ENCODE measurements at regions of chr10 and their contacts with region 1.

Region 1: DNA sequence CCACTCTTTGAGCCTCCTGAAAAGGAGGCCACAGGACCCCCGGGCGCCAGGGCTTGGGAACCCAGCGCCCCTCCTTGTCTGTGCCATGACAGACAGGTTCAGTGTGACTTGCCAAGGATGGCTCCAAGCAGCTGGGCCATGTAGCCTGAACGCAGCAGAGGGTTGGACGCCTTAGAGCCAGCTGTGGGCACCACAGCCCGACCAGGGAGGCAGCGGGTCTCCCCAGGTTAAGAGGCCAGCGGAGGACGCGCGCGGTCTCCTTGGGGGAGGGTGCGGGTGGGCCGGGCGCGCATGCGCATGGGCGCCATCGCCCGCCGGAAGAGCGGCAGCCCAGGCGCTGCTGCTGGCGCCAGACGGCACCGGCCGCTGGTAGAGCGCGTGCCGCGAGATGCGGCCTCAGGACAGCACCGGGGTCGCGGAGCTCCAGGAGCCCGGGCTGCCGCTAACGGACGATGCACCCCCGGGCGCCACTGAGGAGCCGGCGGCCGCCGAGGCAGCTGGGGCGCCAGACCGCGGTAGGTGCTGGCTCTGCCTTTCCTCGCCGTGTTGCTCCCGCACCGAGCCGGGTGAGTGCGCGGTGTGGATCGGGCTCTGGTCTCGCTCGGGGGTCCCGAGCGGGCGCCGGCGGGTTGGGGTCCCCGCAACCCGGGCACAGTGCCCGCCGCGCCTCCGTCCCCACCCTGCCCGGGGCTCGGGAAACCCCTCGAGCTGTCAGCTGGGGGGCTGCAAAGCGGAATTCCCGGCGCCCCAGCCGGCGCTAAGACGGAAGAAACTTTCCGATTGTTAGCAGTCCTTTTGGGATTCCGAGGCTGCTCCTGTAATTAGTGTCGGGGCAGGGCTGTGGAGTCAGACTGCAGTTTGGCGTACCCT is at the start of gene SLC35G1:
- DNase-seq: peak; percentile 48 to 75 (median 66)
- ATAC-seq: peak; percentile 89
- H3K4me3 ChIP-seq: peak within 1 kb of the TSS; percentile 72
- H3K4me3 Mint-ChIP-seq: peak within 1 kb of the TSS; percentile 81 to 91 (median 86)
- H3K27ac ChIP-seq: peak within 1 kb of the TSS; percentile 62
- H3K27ac Mint-ChIP-seq: peak within 1 kb of the TSS; percentile 56 to 81 (median 74)
- H3K4me1 ChIP-seq: peaks cover 6 to 18% of the 10 kb centered on the region in 2 donors
- H3K4me1 Mint-ChIP-seq: peaks cover 23 to 47% (median 40%) of the 10 kb centered on the region in 7 donors
- H3K27me3 ChIP-seq: no peaks in the 10 kb centered on the region
- H3K27me3 Mint-ChIP-seq: peaks cover 0 to 9% (median 7%) of the 10 kb centered on the region in 5 donors
- total RNA-seq, gene SLC35G1: 2.4 to 7.2 (median 3.5) TPM

Region 2: GRCh38 chr10:93505075-93505474 is 388.8 kb before region 1 on chr10:
- CTCF ChIA-PET with region 1: no interaction called
- POLR2A ChIA-PET with region 1: no interaction called
- intact Hi-C with region 1: no loop called
- DNase-seq: no peak
- ATAC-seq: no peak
- H3K4me3 ChIP-seq: no peak overlapping the region
- H3K4me3 Mint-ChIP-seq: no peak overlapping the region
- H3K27ac ChIP-seq: no peak overlapping the region
- H3K27ac Mint-ChIP-seq: peak overlapping the region in 1 of 9 donors; percentile 24
- H3K4me1 ChIP-seq: no peaks in the 10 kb centered on the region
- H3K4me1 Mint-ChIP-seq: peaks cover 0 to 50% (median 2%) of the 10 kb centered on the region in 7 donors
- H3K27me3 ChIP-seq: no peaks in the 10 kb centered on the region
- H3K27me3 Mint-ChIP-seq: no peaks in the 10 kb centered on the region

Region 3: GRCh38 chr10:93751832-93752231 is 142.0 kb before region 1 on chr10:
- CTCF ChIA-PET with region 1: no interaction called
- POLR2A ChIA-PET with region 1: no interaction called
- intact Hi-C with region 1: loop called in 1 of 2 experiments (anchors 1 kb)
- DNase-seq: peak in 5 of 9 donors; percentile 5 to 9 (median 7)
- ATAC-seq: peak; percentile 60
- H3K4me3 ChIP-seq: peak overlapping the region; percentile 32
- H3K4me3 Mint-ChIP-seq: peak overlapping the region in 9 of 10 donors; percentile 32 to 78 (median 60)
- H3K27ac ChIP-seq: no peak overlapping the region
- H3K27ac Mint-ChIP-seq: no peak overlapping the region
- H3K4me1 ChIP-seq: no peaks in the 10 kb centered on the region
- H3K4me1 Mint-ChIP-seq: peaks cover 0 to 9% (median 8%) of the 10 kb centered on the region in 7 donors
- H3K27me3 ChIP-seq: no peaks in the 10 kb centered on the region
- H3K27me3 Mint-ChIP-seq: peaks cover 7 to 22% (median 19%) of the 10 kb centered on the region in 5 donors

Region 4: GRCh38 chr10:93904901-93905300 is 11.0 kb after region 1 on chr10:
- CTCF ChIA-PET with region 1: interaction called, 3 read pairs
- POLR2A ChIA-PET with region 1: interaction called, 8 read pairs
- intact Hi-C with region 1: loop called in 1 of 2 experiments (anchors 1 kb)
- DNase-seq: no peak
- ATAC-seq: no peak
- H3K4me3 ChIP-seq: no peak overlapping the region
- H3K4me3 Mint-ChIP-seq: no peak overlapping the region
- H3K27ac ChIP-seq: no peak overlapping the region
- H3K27ac Mint-ChIP-seq: peak overlapping the region in 2 of 9 donors; percentile 38 to 82
- H3K4me1 ChIP-seq: peaks cover 0 to 20% of the 10 kb centered on the region in 2 donors
- H3K4me1 Mint-ChIP-seq: peaks cover 10 to 34% (median 26%) of the 10 kb centered on the region in 7 donors
- H3K27me3 ChIP-seq: no peaks in the 10 kb centered on the region
- H3K27me3 Mint-ChIP-seq: no peaks in the 10 kb centered on the region

Region 5: GRCh38 chr10:94983555-94983954 is 1089.7 kb after region 1 on chr10:
- CTCF ChIA-PET with region 1: no interaction called
- POLR2A ChIA-PET with region 1: no interaction called
- intact Hi-C with region 1: no loop called
- DNase-seq: no peak
- ATAC-seq: no peak
- H3K4me3 ChIP-seq: no peak overlapping the region
- H3K4me3 Mint-ChIP-seq: no peak overlapping the region
- H3K27ac ChIP-seq: no peak overlapping the region
- H3K27ac Mint-ChIP-seq: no peak overlapping the region
- H3K4me1 ChIP-seq: no peaks in the 10 kb centered on the region
- H3K4me1 Mint-ChIP-seq: no peaks in the 10 kb centered on the region
- H3K27me3 ChIP-seq: no peaks in the 10 kb centered on the region
- H3K27me3 Mint-ChIP-seq: no peaks in the 10 kb centered on the region

Measured in naive thymus-derived CD4-positive, alpha-beta T cell (primary cell).